B cell (primary cell): ENCODE measurements at regions of chr4 and their contacts with region 1.

Region 1: DNA sequence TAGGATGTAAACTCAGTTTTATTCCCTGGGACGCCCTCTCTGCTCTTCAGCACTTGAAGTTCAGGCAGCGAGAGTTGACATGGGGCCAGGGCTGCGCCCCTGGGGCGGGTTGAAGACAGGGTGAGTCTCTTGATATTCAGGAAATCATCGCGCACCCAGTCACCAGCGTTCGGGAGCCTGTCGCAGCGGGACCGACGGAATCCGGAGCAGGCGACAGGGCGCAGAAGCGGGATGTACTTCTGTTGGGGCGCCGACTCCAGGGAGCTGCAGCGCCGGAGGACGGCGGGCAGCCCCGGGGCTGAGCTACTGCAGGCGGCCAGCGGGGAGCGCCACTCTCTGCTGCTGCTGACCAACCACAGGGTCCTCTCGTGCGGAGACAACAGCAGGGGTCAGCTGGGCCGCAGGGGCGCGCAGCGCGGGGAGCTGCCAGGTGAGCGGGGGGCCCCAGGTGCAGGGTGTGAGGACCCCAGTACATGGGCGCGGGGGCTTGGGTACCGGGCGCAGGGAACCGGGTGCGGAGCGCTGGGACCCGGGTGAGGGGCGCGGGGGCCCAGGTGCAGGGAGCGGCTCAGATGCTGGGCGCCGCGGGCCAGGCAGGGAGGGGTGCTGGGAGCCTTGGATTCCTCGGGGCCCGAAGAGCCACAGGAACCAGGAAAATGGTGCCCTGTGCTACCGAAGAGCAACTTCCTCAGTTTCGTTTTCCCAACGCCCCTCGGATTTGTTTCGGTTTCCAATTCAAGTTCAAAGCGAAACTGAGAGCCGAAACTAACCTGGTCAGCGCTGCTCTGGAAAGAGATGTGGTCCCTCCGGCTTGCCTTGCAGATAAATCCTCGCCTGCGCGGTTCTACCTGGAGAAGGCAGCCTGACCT is at the start of gene HERC6:
- DNase-seq: peak; percentile 90
- ATAC-seq: peak; percentile 84
- H3K4me3 ChIP-seq: peak within 1 kb of the TSS; percentile 74 to 99 (median 96)
- H3K4me3 Mint-ChIP-seq: peak within 1 kb of the TSS; percentile 90
- H3K27ac ChIP-seq: peak within 1 kb of the TSS; percentile 84 to 89
- H3K27ac Mint-ChIP-seq: peak within 1 kb of the TSS; percentile 88
- H3K4me1 ChIP-seq: peaks cover 10 to 15% of the 10 kb centered on the region in 2 donors
- H3K4me1 Mint-ChIP-seq: peaks cover 26% of the 10 kb centered on the region
- H3K27me3 ChIP-seq: no peaks in the 10 kb centered on the region
- H3K27me3 Mint-ChIP-seq: no peaks in the 10 kb centered on the region
- CTCF ChIP-seq: peak; percentile 78
- total RNA-seq, gene HERC6: 10.9 and 11.3 TPM in 2 replicates

Region 2: DNA sequence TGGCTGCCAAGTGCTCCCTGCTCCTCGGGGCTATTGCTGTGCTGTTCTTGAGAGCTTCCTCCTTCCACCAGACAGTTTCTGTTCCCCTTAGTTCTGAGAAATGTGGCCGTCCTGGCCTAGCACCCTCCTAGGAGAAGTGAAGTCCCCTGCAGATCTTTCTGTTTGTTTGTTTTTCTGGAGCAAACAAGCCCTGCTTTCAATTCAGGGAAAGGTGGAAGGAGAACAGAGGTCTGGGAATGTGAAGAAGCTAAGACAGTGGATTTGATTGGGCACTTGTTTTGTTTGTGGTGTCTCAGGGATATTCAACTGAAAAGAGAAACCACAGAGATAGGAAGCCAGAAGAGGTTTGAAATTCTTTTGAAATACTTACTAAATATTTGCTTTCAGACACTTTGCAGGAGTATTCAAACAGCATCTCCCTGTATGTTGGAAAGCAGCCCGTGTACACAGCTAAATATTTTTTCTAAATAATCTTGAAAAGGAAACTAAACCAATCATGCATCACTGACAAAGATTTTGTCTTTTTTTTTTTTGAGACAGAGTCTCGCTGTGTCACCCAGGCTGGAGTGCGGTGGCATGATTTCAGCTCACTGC is 58.0 kb before region 1 on chr4:
- CTCF ChIA-PET with region 1: interaction called, 8 read pairs
- POLR2A ChIA-PET with region 1: interaction called, 8 read pairs
- intact Hi-C with region 1: loop called (anchors 1 kb)
- DNase-seq: peak; percentile 82
- ATAC-seq: peak; percentile 99
- H3K4me3 ChIP-seq: peak overlapping the region in 3 of 5 experiments; percentile 35 to 64 (median 42)
- H3K4me3 Mint-ChIP-seq: peak overlapping the region; percentile 90
- H3K27ac ChIP-seq: peak overlapping the region; percentile 68 to 87
- H3K27ac Mint-ChIP-seq: peak overlapping the region; percentile 99
- H3K4me1 ChIP-seq: peaks cover 30 to 34% of the 10 kb centered on the region in 2 donors
- H3K4me1 Mint-ChIP-seq: peaks cover 29% of the 10 kb centered on the region
- H3K27me3 ChIP-seq: no peaks in the 10 kb centered on the region
- H3K27me3 Mint-ChIP-seq: no peaks in the 10 kb centered on the region
- CTCF ChIP-seq: no peak

Region 3: DNA sequence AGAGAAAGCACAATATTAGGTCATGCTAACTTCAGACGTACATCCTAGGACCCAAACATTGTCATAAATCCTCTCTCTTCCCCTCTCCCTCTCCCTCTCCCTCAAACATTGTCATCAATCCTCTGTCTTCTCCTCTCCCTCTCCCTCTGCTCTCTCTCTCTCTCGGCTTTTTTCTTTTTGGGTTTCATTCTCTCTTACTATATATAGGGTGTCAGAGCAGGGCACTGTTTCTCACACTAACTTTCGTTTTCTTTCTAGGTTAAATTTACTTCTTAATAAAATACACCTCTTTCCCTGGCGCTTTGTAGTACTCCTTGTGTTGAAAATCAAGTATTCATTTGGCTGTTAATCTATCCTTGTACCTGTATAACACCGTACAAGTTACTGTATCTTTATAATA is 40.9 kb after region 1 on chr4:
- CTCF ChIA-PET with region 1: no interaction called
- POLR2A ChIA-PET with region 1: no interaction called
- intact Hi-C with region 1: no loop called
- DNase-seq: no peak
- ATAC-seq: no peak
- H3K4me3 ChIP-seq: no peak overlapping the region
- H3K4me3 Mint-ChIP-seq: no peak overlapping the region
- H3K27ac ChIP-seq: no peak overlapping the region
- H3K27ac Mint-ChIP-seq: no peak overlapping the region
- H3K4me1 ChIP-seq: no peaks in the 10 kb centered on the region
- H3K4me1 Mint-ChIP-seq: no peaks in the 10 kb centered on the region
- H3K27me3 ChIP-seq: no peaks in the 10 kb centered on the region
- H3K27me3 Mint-ChIP-seq: no peaks in the 10 kb centered on the region
- CTCF ChIP-seq: no peak

Region 4: GRCh38 chr4:88456757-88457306 is 77.9 kb after region 1 on chr4 and contains the start of gene HERC5:
- CTCF ChIA-PET with region 1: interaction called, 16 read pairs
- POLR2A ChIA-PET with region 1: interaction called, 9 read pairs
- intact Hi-C with region 1: loop called (anchors 1 kb)
- DNase-seq: peak; percentile 96
- ATAC-seq: peak; percentile 94
- H3K4me3 ChIP-seq: peak within 1 kb of the TSS; percentile 69 to 93 (median 85)
- H3K4me3 Mint-ChIP-seq: peak within 1 kb of the TSS; percentile 100
- H3K27ac ChIP-seq: peak within 1 kb of the TSS; percentile 52 to 70
- H3K27ac Mint-ChIP-seq: peak within 1 kb of the TSS; percentile 99
- H3K4me1 ChIP-seq: peaks cover 11 to 16% of the 10 kb centered on the region in 2 donors
- H3K4me1 Mint-ChIP-seq: peaks cover 19% of the 10 kb centered on the region
- H3K27me3 ChIP-seq: no peaks in the 10 kb centered on the region
- H3K27me3 Mint-ChIP-seq: no peaks in the 10 kb centered on the region
- CTCF ChIP-seq: no peak
- total RNA-seq, gene HERC5: 10.6 and 12.0 TPM in 2 replicates

Region 5: GRCh38 chr4:88477229-88477860 is 98.4 kb after region 1 on chr4:
- CTCF ChIA-PET with region 1: no interaction called
- POLR2A ChIA-PET with region 1: no interaction called
- intact Hi-C with region 1: no loop called
- DNase-seq: no peak
- ATAC-seq: no peak
- H3K4me3 ChIP-seq: no peak overlapping the region
- H3K4me3 Mint-ChIP-seq: no peak overlapping the region
- H3K27ac ChIP-seq: no peak overlapping the region
- H3K27ac Mint-ChIP-seq: no peak overlapping the region
- H3K4me1 ChIP-seq: no peaks in the 10 kb centered on the region
- H3K4me1 Mint-ChIP-seq: no peaks in the 10 kb centered on the region
- H3K27me3 ChIP-seq: no peaks in the 10 kb centered on the region
- H3K27me3 Mint-ChIP-seq: no peaks in the 10 kb centered on the region
- CTCF ChIP-seq: no peak

Region 6: DNA sequence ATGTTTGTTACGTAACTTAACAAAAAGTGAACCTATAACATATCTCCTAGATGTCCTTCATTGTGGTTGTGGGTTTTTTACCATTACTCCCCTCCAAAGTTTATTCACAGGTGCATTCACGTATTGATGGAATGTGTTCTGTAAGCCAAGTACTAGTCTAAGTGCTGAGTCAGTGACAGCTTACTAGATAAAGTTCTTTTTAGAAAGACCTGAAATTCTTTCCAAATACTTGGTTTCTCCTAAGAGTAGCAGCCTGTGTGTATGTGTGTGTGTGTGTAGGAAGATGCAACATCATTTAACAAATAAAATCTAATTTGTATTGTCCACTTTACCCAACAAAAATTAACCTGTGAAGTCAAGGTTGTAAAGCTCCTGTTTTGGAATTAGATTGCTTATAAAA is 296.6 kb after region 1 on chr4:
- CTCF ChIA-PET with region 1: no interaction called
- POLR2A ChIA-PET with region 1: no interaction called
- intact Hi-C with region 1: no loop called
- DNase-seq: no peak
- ATAC-seq: no peak
- H3K4me3 ChIP-seq: no peak overlapping the region
- H3K4me3 Mint-ChIP-seq: no peak overlapping the region
- H3K27ac ChIP-seq: no peak overlapping the region
- H3K27ac Mint-ChIP-seq: no peak overlapping the region
- H3K4me1 ChIP-seq: no peaks in the 10 kb centered on the region
- H3K4me1 Mint-ChIP-seq: no peaks in the 10 kb centered on the region
- H3K27me3 ChIP-seq: no peaks in the 10 kb centered on the region
- H3K27me3 Mint-ChIP-seq: no peaks in the 10 kb centered on the region
- CTCF ChIP-seq: no peak

Region 7: DNA sequence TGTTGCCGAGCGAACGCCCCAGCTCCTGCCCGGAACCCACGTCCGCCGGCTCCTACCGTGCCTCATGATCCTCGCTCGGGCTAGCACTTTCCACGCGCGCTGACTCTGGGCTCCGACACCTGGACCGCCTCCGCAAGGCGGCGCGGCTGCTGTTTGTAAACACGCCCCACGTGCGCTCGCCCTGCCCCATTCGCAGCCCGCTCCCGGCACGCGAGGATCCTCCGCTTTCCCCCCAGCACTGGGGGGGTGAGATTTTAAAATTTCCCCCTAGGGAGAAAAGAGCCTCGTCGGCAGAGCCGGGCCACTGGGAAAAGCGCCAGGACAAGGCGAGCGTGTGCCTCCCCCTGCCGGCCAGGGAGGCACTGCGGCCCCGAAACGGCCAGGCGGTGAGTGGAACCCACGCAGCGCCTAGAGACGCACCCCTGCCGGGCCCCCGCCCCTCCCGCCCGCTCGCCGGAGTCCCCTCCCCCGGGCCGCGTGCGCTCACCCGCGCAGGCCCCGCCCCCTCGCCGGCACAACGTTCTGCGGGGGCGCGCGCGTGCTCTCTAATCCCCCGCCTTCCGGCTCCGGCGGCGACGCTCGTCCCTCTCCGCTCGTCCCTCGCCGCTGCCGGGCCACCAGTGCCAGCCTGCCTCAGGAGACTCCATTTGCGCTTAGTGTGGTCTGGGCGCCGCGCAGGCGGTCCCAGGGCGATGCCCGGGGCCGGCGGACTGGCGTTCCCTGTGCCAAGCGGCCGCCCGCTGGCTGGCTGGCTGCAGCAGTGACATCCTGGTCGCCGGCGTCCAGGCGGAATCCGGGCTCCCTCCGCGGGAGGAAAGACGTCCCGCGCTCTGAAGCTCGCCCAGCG is 732.3 kb after region 1 on chr4 and contains the start of gene TIGD2:
- CTCF ChIA-PET with region 1: no interaction called
- POLR2A ChIA-PET with region 1: no interaction called
- intact Hi-C with region 1: loop called (anchors 2 kb)
- DNase-seq: peak; percentile 94
- ATAC-seq: peak; percentile 92
- H3K4me3 ChIP-seq: peak within 1 kb of the TSS; percentile 70 to 88 (median 82)
- H3K4me3 Mint-ChIP-seq: peak within 1 kb of the TSS; percentile 88
- H3K27ac ChIP-seq: peak within 1 kb of the TSS; percentile 30 to 85
- H3K27ac Mint-ChIP-seq: peak within 1 kb of the TSS; percentile 85
- H3K4me1 ChIP-seq: peaks cover 14 to 18% of the 10 kb centered on the region in 2 donors
- H3K4me1 Mint-ChIP-seq: peaks cover 27% of the 10 kb centered on the region
- H3K27me3 ChIP-seq: peaks cover 0 to 4% (median 1%) of the 10 kb centered on the region in 4 experiments
- H3K27me3 Mint-ChIP-seq: peaks cover 2% of the 10 kb centered on the region
- CTCF ChIP-seq: peak; percentile 94
- total RNA-seq, gene TIGD2: 8.6 and 9.5 TPM in 2 replicates

Region 8: GRCh38 chr4:89324671-89325070 is 945.7 kb after region 1 on chr4:
- CTCF ChIA-PET with region 1: no interaction called
- POLR2A ChIA-PET with region 1: no interaction called
- intact Hi-C with region 1: loop called (anchors 10 kb)
- DNase-seq: peak; percentile 70
- ATAC-seq: peak; percentile 97
- H3K4me3 ChIP-seq: no peak overlapping the region
- H3K4me3 Mint-ChIP-seq: peak overlapping the region; percentile 21
- H3K27ac ChIP-seq: no peak overlapping the region
- H3K27ac Mint-ChIP-seq: no peak overlapping the region
- H3K4me1 ChIP-seq: peaks cover 12 to 15% of the 10 kb centered on the region in 2 donors
- H3K4me1 Mint-ChIP-seq: peaks cover 24% of the 10 kb centered on the region
- H3K27me3 ChIP-seq: no peaks in the 10 kb centered on the region
- H3K27me3 Mint-ChIP-seq: no peaks in the 10 kb centered on the region
- CTCF ChIP-seq: no peak